ENCODE measurements at regions of chr10 and their contacts with region 1.

Region 1: GRCh38 chr10:72107325-72108003 is 19.1 kb upstream of the SPOCK2 start:
- DNase-seq: no peak
- ATAC-seq: peak; percentile 42; the same call in 1 of the 2 replicates
- H3K4me3 ChIP-seq: no peak overlapping the region
- H3K27ac ChIP-seq: no peak overlapping the region
- H3K4me1 ChIP-seq: peaks cover 2% of the 10 kb centered on the region; the same call in 1 of the 2 replicates
- H3K27me3 ChIP-seq: no peaks in the 10 kb centered on the region
- CTCF ChIP-seq: no peak
- POLR2A ChIP-seq: no peak
- RAD21 ChIP-seq: no peak

Region 2: GRCh38 chr10:72038458-72039001 is 68.9 kb before region 1 on chr10:
- CTCF ChIA-PET with region 1: no interaction called
- POLR2A ChIA-PET with region 1: no interaction called
- dilution Hi-C with region 1: no loop called
- in situ Hi-C with region 1: no loop called
- intact Hi-C with region 1: no loop called
- DNase-seq: peak; percentile 64
- ATAC-seq: peak; percentile 64
- H3K4me3 ChIP-seq: no peak overlapping the region
- H3K27ac ChIP-seq: no peak overlapping the region
- H3K4me1 ChIP-seq: peaks cover 6% of the 10 kb centered on the region
- H3K27me3 ChIP-seq: peaks cover 7% of the 10 kb centered on the region; the same call in 1 of the 2 replicates
- CTCF ChIP-seq: no peak
- POLR2A ChIP-seq: no peak
- RAD21 ChIP-seq: no peak

Region 3: GRCh38 chr10:72173635-72174296 is 66.3 kb after region 1 on chr10:
- CTCF ChIA-PET with region 1: no interaction called
- POLR2A ChIA-PET with region 1: no interaction called
- dilution Hi-C with region 1: no loop called
- in situ Hi-C with region 1: no loop called
- intact Hi-C with region 1: loop called (anchors 5 kb)
- DNase-seq: peak; percentile 13
- ATAC-seq: peak; percentile 55
- H3K4me3 ChIP-seq: no peak overlapping the region
- H3K27ac ChIP-seq: no peak overlapping the region
- H3K4me1 ChIP-seq: peaks cover 9% of the 10 kb centered on the region
- H3K27me3 ChIP-seq: no peaks in the 10 kb centered on the region
- CTCF ChIP-seq: no peak
- POLR2A ChIP-seq: no peak
- RAD21 ChIP-seq: no peak

Measured in IMR-90 (cell line).